ENCODE measurements at regions of chr10 and their contacts with region 1.

Region 1: DNA sequence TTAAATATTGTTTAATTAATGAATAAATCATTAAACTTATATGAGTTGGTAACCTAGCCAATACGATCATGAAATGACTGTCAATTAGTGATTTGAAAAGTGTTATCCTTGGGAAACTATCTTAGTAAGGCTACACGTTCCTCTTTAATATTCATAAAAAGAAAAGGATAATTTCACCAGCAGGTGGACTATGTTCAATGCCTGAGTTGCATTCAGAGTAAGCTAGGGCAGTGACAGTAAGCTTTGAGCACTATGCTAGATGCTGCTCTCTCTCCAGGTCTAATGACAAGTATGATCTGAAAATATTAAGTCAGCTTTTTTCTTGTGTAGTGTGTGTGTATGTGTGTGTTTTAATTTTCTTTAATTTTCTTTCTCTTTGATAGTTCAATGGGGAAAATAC is 486.3 kb upstream of the PCDH15 start:
- DNase-seq: no peak
- H3K4me3 ChIP-seq: no peak overlapping the region
- H3K27ac ChIP-seq: no peak overlapping the region
- H3K4me1 ChIP-seq: no peaks in the 10 kb centered on the region
- H3K27me3 ChIP-seq: no peaks in the 10 kb centered on the region
- CTCF ChIP-seq: no peak
- POLR2A ChIP-seq: no peak

Region 2: DNA sequence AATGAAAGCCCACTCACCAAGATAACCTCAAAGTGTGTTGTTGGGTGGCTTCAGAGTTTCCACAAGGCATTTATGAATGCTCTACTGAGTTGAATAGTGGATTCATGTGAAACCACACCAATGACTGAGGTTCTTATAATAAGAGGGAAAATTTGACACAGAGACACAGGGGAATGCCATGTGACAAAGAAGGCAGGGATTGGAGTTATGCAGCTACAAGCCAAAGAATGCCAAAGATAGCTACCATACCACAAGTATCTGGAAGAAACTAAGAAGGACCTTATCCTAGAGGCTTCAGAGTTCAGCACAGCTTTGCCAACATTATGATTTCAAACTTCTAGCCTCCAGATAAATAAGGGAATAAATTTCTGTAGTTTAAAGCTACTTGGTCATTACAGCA is 418.3 kb before region 1 on chr10:
- intact Hi-C with region 1: no loop called
- DNase-seq: no peak
- H3K4me3 ChIP-seq: no peak overlapping the region
- H3K27ac ChIP-seq: no peak overlapping the region
- H3K4me1 ChIP-seq: no peaks in the 10 kb centered on the region
- H3K27me3 ChIP-seq: no peaks in the 10 kb centered on the region
- CTCF ChIP-seq: no peak
- POLR2A ChIP-seq: no peak

Region 3: DNA sequence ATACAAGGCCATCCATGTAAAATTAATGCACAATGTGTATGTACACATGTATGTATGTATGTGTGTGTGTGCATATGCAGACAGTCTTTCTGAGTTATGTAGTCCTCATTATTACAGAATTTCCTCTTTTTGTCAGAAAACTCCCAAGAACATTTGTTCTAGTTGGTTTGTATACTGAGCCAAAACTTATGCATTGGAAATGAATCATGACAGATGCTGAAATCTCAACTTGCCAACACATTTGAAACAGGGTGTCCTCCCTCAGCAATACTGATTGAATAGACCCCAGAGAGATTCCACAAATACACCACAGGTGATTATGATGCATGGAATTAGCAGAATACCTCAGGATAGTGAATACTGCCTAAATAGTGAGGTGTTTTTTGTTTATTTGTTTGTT is 13.4 kb before region 1 on chr10:
- intact Hi-C with region 1: no loop called
- DNase-seq: no peak
- H3K4me3 ChIP-seq: no peak overlapping the region
- H3K27ac ChIP-seq: no peak overlapping the region
- H3K4me1 ChIP-seq: no peaks in the 10 kb centered on the region
- H3K27me3 ChIP-seq: no peaks in the 10 kb centered on the region
- CTCF ChIP-seq: no peak
- POLR2A ChIP-seq: no peak

Region 4: GRCh38 chr10:57015595-57016318 is 1728.4 kb after region 1 on chr10:
- intact Hi-C with region 1: loop called (anchors 5 kb)
- DNase-seq: no peak
- H3K4me3 ChIP-seq: no peak overlapping the region
- H3K27ac ChIP-seq: no peak overlapping the region
- H3K4me1 ChIP-seq: no peaks in the 10 kb centered on the region
- H3K27me3 ChIP-seq: no peaks in the 10 kb centered on the region
- CTCF ChIP-seq: no peak
- POLR2A ChIP-seq: no peak